Naive thymus-derived CD4-positive, alpha-beta T cell (primary cell): ENCODE measurements at regions of chr13 and their contacts with region 1.

Region 1: GRCh38 chr13:46321494-46322225 is 65.4 kb downstream of the RUBCNL start:
- DNase-seq: peak; percentile 53 to 80 (median 75)
- ATAC-seq: peak; percentile 92
- H3K4me3 ChIP-seq: peak overlapping the region; percentile 39
- H3K4me3 Mint-ChIP-seq: peak overlapping the region; percentile 82 to 93 (median 86)
- H3K27ac ChIP-seq: peak overlapping the region; percentile 56
- H3K27ac Mint-ChIP-seq: peak overlapping the region; percentile 86 to 98 (median 95)
- H3K4me1 ChIP-seq: peaks cover 11 to 12% of the 10 kb centered on the region in 2 donors
- H3K4me1 Mint-ChIP-seq: peaks cover 23 to 48% (median 42%) of the 10 kb centered on the region in 7 donors
- H3K27me3 ChIP-seq: no peaks in the 10 kb centered on the region
- H3K27me3 Mint-ChIP-seq: no peaks in the 10 kb centered on the region

Region 2: GRCh38 chr13:45511310-45512097 is 810.2 kb before region 1 on chr13:
- CTCF ChIA-PET with region 1: interaction called, 6 read pairs
- POLR2A ChIA-PET with region 1: no interaction called
- intact Hi-C with region 1: loop called (anchors 1 kb)
- DNase-seq: peak in 7 of 9 donors; percentile 41 to 72 (median 63)
- ATAC-seq: peak; percentile 95
- H3K4me3 ChIP-seq: no peak overlapping the region
- H3K4me3 Mint-ChIP-seq: no peak overlapping the region
- H3K27ac ChIP-seq: no peak overlapping the region
- H3K27ac Mint-ChIP-seq: peak overlapping the region in 7 of 9 donors; percentile 22 to 60 (median 46)
- H3K4me1 ChIP-seq: no peaks in the 10 kb centered on the region
- H3K4me1 Mint-ChIP-seq: peaks cover 3 to 7% (median 5%) of the 10 kb centered on the region in 7 donors
- H3K27me3 ChIP-seq: no peaks in the 10 kb centered on the region
- H3K27me3 Mint-ChIP-seq: no peaks in the 10 kb centered on the region

Region 3: GRCh38 chr13:45925151-45925550 is 396.5 kb before region 1 on chr13:
- CTCF ChIA-PET with region 1: no interaction called
- POLR2A ChIA-PET with region 1: no interaction called
- intact Hi-C with region 1: loop called in 1 of 2 experiments (anchors 1 kb)
- DNase-seq: no peak
- ATAC-seq: no peak
- H3K4me3 ChIP-seq: no peak overlapping the region
- H3K4me3 Mint-ChIP-seq: no peak overlapping the region
- H3K27ac ChIP-seq: no peak overlapping the region
- H3K27ac Mint-ChIP-seq: no peak overlapping the region
- H3K4me1 ChIP-seq: no peaks in the 10 kb centered on the region
- H3K4me1 Mint-ChIP-seq: no peaks in the 10 kb centered on the region
- H3K27me3 ChIP-seq: no peaks in the 10 kb centered on the region
- H3K27me3 Mint-ChIP-seq: peaks cover 0 to 3% (median 0%) of the 10 kb centered on the region in 5 donors

Region 4: GRCh38 chr13:46146899-46147298 is 174.8 kb before region 1 on chr13:
- CTCF ChIA-PET with region 1: interaction called, 12 read pairs
- POLR2A ChIA-PET with region 1: interaction called, 3 read pairs
- intact Hi-C with region 1: loop called in 1 of 2 experiments (anchors 1 kb)
- DNase-seq: no peak
- ATAC-seq: no peak
- H3K4me3 ChIP-seq: no peak overlapping the region
- H3K4me3 Mint-ChIP-seq: no peak overlapping the region
- H3K27ac ChIP-seq: no peak overlapping the region
- H3K27ac Mint-ChIP-seq: peak overlapping the region; percentile 2 to 77 (median 51)
- H3K4me1 ChIP-seq: no peaks in the 10 kb centered on the region
- H3K4me1 Mint-ChIP-seq: peaks cover 12 to 47% (median 27%) of the 10 kb centered on the region in 7 donors
- H3K27me3 ChIP-seq: no peaks in the 10 kb centered on the region
- H3K27me3 Mint-ChIP-seq: no peaks in the 10 kb centered on the region

Region 5: DNA sequence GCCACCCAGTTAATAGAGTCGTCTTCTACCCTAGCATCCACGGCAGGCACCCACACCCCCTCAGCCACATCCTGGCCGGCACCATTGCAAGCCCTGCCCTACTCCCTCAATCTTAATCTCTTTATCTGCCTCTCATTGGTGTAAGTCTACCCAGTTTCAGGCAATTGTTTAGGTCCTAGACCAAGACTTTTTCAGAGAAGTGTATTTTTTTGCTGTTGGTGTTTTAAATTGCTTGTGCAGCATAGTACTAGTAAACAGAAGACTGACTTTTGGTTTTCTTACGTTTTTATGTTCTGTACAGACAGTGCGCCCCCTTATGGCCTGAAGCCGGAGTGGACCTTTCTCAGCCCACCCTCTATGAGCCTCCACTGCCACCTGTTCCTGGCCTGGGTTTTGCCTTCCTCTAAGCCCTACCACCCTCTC is 137.4 kb before region 1 on chr13:
- CTCF ChIA-PET with region 1: interaction called, 8 read pairs
- POLR2A ChIA-PET with region 1: interaction called, 4 read pairs
- intact Hi-C with region 1: loop called in 1 of 2 experiments (anchors 1 kb)
- DNase-seq: peak in 8 of 9 donors; percentile 60 to 74 (median 69)
- ATAC-seq: peak; percentile 75
- H3K4me3 ChIP-seq: peak overlapping the region; percentile 83
- H3K4me3 Mint-ChIP-seq: peak overlapping the region; percentile 67 to 99 (median 85)
- H3K27ac ChIP-seq: peak overlapping the region; percentile 82
- H3K27ac Mint-ChIP-seq: peak overlapping the region; percentile 86 to 99 (median 96)
- H3K4me1 ChIP-seq: peaks cover 27 to 35% of the 10 kb centered on the region in 2 donors
- H3K4me1 Mint-ChIP-seq: peaks cover 35 to 48% (median 38%) of the 10 kb centered on the region in 7 donors
- H3K27me3 ChIP-seq: no peaks in the 10 kb centered on the region
- H3K27me3 Mint-ChIP-seq: peaks cover 0 to 3% (median 0%) of the 10 kb centered on the region in 5 donors

Region 6: GRCh38 chr13:46295491-46296114 is 26.1 kb before region 1 on chr13:
- CTCF ChIA-PET with region 1: interaction called, 108 read pairs
- POLR2A ChIA-PET with region 1: interaction called, 33 read pairs
- intact Hi-C with region 1: loop called (anchors 1 kb)
- DNase-seq: peak in 8 of 9 donors; percentile 28 to 90 (median 88)
- ATAC-seq: peak; percentile 94
- H3K4me3 ChIP-seq: peak overlapping the region; percentile 12
- H3K4me3 Mint-ChIP-seq: peak overlapping the region; percentile 4 to 87 (median 76)
- H3K27ac ChIP-seq: peak overlapping the region; percentile 77
- H3K27ac Mint-ChIP-seq: peak overlapping the region; percentile 92 to 99 (median 96)
- H3K4me1 ChIP-seq: peaks cover 35 to 52% of the 10 kb centered on the region in 2 donors
- H3K4me1 Mint-ChIP-seq: peaks cover 36 to 73% (median 68%) of the 10 kb centered on the region in 7 donors
- H3K27me3 ChIP-seq: no peaks in the 10 kb centered on the region
- H3K27me3 Mint-ChIP-seq: no peaks in the 10 kb centered on the region